Upper lobe of right lung (tissue), 1 donor: ENCODE measurements at regions of chr22 and their contacts with region 1.

Region 1: GRCh38 chr22:20284471-20285086 is 16.5 kb upstream of the RTN4R start:
- DNase-seq: no peak
- ATAC-seq: no peak
- H3K4me3 ChIP-seq: no peak overlapping the region
- H3K27ac ChIP-seq: no peak overlapping the region
- H3K4me1 ChIP-seq: no peaks in the 10 kb centered on the region
- H3K27me3 ChIP-seq: no peaks in the 10 kb centered on the region
- CTCF ChIP-seq: no peak

Region 2: GRCh38 chr22:20156611-20157429 is 127.8 kb before region 1 on chr22:
- intact Hi-C with region 1: loop called (anchors 5 kb)
- DNase-seq: peak; percentile 89
- ATAC-seq: peak; percentile 84
- H3K4me3 ChIP-seq: no peak overlapping the region
- H3K27ac ChIP-seq: no peak overlapping the region
- H3K4me1 ChIP-seq: no peaks in the 10 kb centered on the region
- H3K27me3 ChIP-seq: no peaks in the 10 kb centered on the region
- CTCF ChIP-seq: peak; percentile 99

Region 3: DNA sequence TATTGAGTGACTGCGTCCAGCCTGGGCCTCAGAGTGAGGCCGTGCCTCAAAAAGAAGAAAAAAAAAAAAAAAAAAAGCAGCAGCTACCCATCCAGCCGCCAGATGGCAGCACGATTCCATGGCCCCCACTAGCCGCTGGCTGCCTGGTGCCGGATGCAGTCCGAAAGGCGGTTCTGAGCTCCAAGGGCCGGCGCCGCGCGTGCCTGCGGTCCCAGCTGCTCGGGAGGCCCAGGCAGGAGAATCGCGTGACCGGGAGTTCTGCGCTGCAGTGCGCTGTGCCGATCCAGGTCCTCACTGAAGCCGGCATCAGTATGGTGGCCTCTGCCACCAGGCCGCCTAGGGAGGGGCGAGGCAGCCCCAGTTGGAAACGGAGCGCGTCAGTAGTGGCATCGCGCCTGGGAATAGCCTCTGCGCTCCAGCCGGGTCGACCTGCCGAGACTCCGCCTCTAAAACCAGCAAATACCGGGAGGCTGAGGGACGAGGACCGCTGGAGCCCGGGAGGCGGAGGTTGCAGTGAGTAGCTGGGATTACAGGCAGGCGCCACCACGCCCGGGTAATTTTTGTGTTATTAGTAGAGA is 133.7 kb after region 1 on chr22:
- intact Hi-C with region 1: no loop called
- DNase-seq: peak; percentile 92
- ATAC-seq: peak; percentile 96
- H3K4me3 ChIP-seq: peak overlapping the region; percentile 48
- H3K27ac ChIP-seq: no peak overlapping the region
- H3K4me1 ChIP-seq: peaks cover 4% of the 10 kb centered on the region
- H3K27me3 ChIP-seq: no peaks in the 10 kb centered on the region
- CTCF ChIP-seq: peak; percentile 84

Region 4: GRCh38 chr22:20464096-20464614 is 179.6 kb after region 1 on chr22:
- intact Hi-C with region 1: no loop called
- DNase-seq: peak; percentile 46
- ATAC-seq: no peak
- H3K4me3 ChIP-seq: no peak overlapping the region
- H3K27ac ChIP-seq: peak overlapping the region; percentile 73
- H3K4me1 ChIP-seq: peaks cover 13% of the 10 kb centered on the region
- H3K27me3 ChIP-seq: no peaks in the 10 kb centered on the region
- CTCF ChIP-seq: no peak